Sigmoid colon (tissue), 7 donors: ENCODE measurements at regions of chr12 and their contacts with region 1.

Region 1: DNA sequence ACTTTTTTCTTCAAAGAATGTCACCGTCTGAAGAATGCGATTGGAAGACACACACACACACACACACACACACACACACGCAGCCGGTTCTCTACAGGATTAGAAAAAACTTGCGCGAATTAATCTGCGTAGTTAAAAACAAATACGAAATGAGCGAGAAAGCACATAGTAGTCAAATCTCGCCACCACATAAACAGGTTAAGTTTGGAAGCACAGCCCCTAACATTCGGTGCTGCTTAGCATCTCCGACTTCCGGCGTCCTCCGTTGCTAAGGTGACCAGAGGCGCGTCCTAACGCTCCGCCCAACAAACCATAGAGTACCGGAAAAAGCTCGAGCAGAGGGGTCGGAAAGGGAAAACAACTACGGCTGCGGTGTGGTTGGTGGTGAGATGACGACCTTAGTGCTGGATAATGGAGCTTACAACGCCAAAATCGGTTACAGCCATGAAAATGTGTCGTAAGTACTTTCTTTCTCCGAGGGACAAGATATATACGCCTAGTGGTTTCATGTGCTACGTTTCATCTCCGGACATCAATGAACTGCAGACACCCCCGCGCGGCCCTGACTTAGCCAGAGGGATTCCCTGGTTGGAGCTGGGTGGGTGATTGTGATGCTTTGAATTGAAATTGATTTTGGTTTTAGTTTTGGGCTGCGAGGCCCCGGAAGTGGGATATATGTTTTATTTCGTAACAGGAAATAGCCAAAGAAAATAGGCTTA is at the start of gene ACTR6:
- DNase-seq: peak; percentile 96
- H3K4me3 ChIP-seq: peak within 1 kb of the TSS; percentile 58 to 85 (median 70)
- H3K27ac ChIP-seq: peak within 1 kb of the TSS; percentile 85 to 92 (median 91)
- H3K4me1 ChIP-seq: peaks cover 0 to 27% (median 17%) of the 10 kb centered on the region in 4 donors
- H3K27me3 ChIP-seq: no peaks in the 10 kb centered on the region
- CTCF ChIP-seq: no peak
- EP300 ChIP-seq: no peak
- POLR2A ChIP-seq: peak in 1 of 2 donors; percentile 46
- total RNA-seq, gene ACTR6: 9.1 to 31.4 (median 23.3) TPM

Region 2: GRCh38 chr12:100077367-100077766 is 123.3 kb before region 1 on chr12:
- intact Hi-C with region 1: loop called (anchors 10 kb)
- DNase-seq: no peak
- H3K4me3 ChIP-seq: no peak overlapping the region
- H3K27ac ChIP-seq: no peak overlapping the region
- H3K4me1 ChIP-seq: no peaks in the 10 kb centered on the region
- H3K27me3 ChIP-seq: no peaks in the 10 kb centered on the region
- CTCF ChIP-seq: no peak
- EP300 ChIP-seq: no peak
- POLR2A ChIP-seq: no peak

Region 3: GRCh38 chr12:100128512-100128908 is 72.1 kb before region 1 on chr12:
- intact Hi-C with region 1: loop called (anchors 2 kb)
- DNase-seq: no peak
- H3K4me3 ChIP-seq: no peak overlapping the region
- H3K27ac ChIP-seq: peak overlapping the region in 2 of 4 donors; percentile 20 to 31
- H3K4me1 ChIP-seq: peaks cover 0 to 39% (median 29%) of the 10 kb centered on the region in 4 donors
- H3K27me3 ChIP-seq: no peaks in the 10 kb centered on the region
- CTCF ChIP-seq: peak in 1 of 4 experiments; percentile 28
- EP300 ChIP-seq: no peak
- POLR2A ChIP-seq: no peak

Region 4: GRCh38 chr12:100142851-100143559 is 57.6 kb before region 1 on chr12 and contains the start of gene BLTP3B:
- intact Hi-C with region 1: loop called (anchors 2 kb)
- DNase-seq: peak; percentile 93
- H3K4me3 ChIP-seq: peak within 1 kb of the TSS; percentile 76 to 99 (median 94)
- H3K27ac ChIP-seq: peak within 1 kb of the TSS; percentile 94 to 100 (median 100)
- H3K4me1 ChIP-seq: peaks cover 0 to 26% (median 24%) of the 10 kb centered on the region in 4 donors
- H3K27me3 ChIP-seq: no peaks in the 10 kb centered on the region
- CTCF ChIP-seq: no peak
- EP300 ChIP-seq: no peak
- POLR2A ChIP-seq: no peak
- total RNA-seq, gene BLTP3B: 33.3 to 41.7 (median 36.4) TPM

Region 5: GRCh38 chr12:100163416-100164152 is 37.0 kb before region 1 on chr12:
- intact Hi-C with region 1: loop called (anchors 2 kb)
- DNase-seq: peak; percentile 87
- H3K4me3 ChIP-seq: peak overlapping the region in 3 of 4 donors; percentile 18 to 29 (median 23)
- H3K27ac ChIP-seq: no peak overlapping the region
- H3K4me1 ChIP-seq: peaks cover 0 to 12% (median 11%) of the 10 kb centered on the region in 4 donors
- H3K27me3 ChIP-seq: no peaks in the 10 kb centered on the region
- CTCF ChIP-seq: peak in 1 of 4 experiments; percentile 8
- EP300 ChIP-seq: no peak
- POLR2A ChIP-seq: no peak

Region 6: DNA sequence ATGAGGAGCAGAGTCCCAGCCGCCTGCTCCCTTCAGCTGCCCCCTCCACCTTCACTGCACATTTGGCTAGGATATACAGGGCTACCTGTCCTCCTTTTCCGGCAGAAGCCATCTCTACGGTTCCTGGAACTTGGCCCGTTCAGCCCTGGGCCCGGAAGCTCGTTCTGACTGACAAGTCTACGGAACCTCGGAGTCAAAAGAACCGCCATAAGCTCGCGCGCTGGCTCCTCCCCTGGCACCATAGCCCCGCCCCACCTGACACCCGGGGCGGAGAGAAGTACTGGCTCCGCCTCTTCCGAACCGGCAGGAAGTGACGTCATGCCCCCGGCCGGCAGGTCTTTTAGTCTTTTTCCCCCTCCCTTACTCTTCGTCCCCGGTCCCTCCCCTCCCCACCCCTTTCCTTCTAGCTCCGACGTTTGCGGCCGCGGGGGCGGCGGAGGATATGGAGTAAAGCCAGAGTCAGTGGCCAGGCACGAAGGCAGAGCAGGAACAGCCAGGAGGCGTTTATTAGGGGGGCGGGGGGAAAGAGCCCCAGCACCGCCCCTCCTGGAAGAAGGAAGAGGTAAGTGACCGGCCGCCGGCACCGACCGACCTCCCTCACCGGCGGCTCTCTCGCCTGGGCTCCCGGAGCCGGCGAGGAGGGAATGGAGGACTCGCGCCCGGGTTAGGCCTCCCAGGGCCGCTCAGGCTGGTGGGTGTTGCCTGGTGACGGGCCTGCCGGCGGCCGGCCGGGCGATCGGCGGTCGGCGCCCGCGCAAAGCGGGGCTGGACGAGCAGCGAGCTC is 66.4 kb after region 1 on chr12 and contains the starts of genes DEPDC4 and SCYL2:
- intact Hi-C with region 1: loop called (anchors 2 kb)
- DNase-seq: peak; percentile 99
- H3K4me3 ChIP-seq: peak within 1 kb of the TSS; percentile 80 to 99 (median 92)
- H3K27ac ChIP-seq: peak within 1 kb of the TSS; percentile 94 to 99 (median 98)
- H3K4me1 ChIP-seq: peaks cover 0 to 42% (median 29%) of the 10 kb centered on the region in 4 donors
- H3K27me3 ChIP-seq: no peaks in the 10 kb centered on the region
- CTCF ChIP-seq: no peak
- EP300 ChIP-seq: no peak
- POLR2A ChIP-seq: peak; percentile 58 to 79
- total RNA-seq, gene DEPDC4: 0.82 TPM in 1 of 4 donors, not detected in the others
- total RNA-seq, gene SCYL2: 52.4 to 97.3 (median 67.0) TPM

Region 7: GRCh38 chr12:100279607-100280244 is 79.1 kb after region 1 on chr12:
- intact Hi-C with region 1: no loop called
- DNase-seq: no peak
- H3K4me3 ChIP-seq: no peak overlapping the region
- H3K27ac ChIP-seq: no peak overlapping the region
- H3K4me1 ChIP-seq: peaks cover 0 to 9% (median 2%) of the 10 kb centered on the region in 4 donors
- H3K27me3 ChIP-seq: no peaks in the 10 kb centered on the region
- CTCF ChIP-seq: no peak
- EP300 ChIP-seq: no peak
- POLR2A ChIP-seq: no peak